ENCODE measurements at regions of chr14 and their contacts with region 1.

Region 1: GRCh38 chr14:21917699-21918436 is 244.2 kb upstream of the OR4E1 start:
- DNase-seq: peak in 7 of 9 donors; percentile 60 to 73 (median 64)
- ATAC-seq: peak; percentile 78
- H3K4me3 ChIP-seq: peak overlapping the region; percentile 49
- H3K4me3 Mint-ChIP-seq: peak overlapping the region; percentile 64 to 93 (median 84)
- H3K27ac ChIP-seq: peak overlapping the region; percentile 44
- H3K27ac Mint-ChIP-seq: peak overlapping the region; percentile 76 to 94 (median 85)
- H3K4me1 ChIP-seq: peaks cover 10 to 49% of the 10 kb centered on the region in 2 donors
- H3K4me1 Mint-ChIP-seq: peaks cover 12 to 83% (median 68%) of the 10 kb centered on the region in 7 donors
- H3K27me3 ChIP-seq: no peaks in the 10 kb centered on the region
- H3K27me3 Mint-ChIP-seq: no peaks in the 10 kb centered on the region

Region 2: GRCh38 chr14:21894003-21894897 is 23.6 kb before region 1 on chr14:
- CTCF ChIA-PET with region 1: interaction called, 8 read pairs
- POLR2A ChIA-PET with region 1: interaction called, 3 read pairs
- intact Hi-C with region 1: loop called in 1 of 2 experiments (anchors 2 kb)
- DNase-seq: peak; percentile 11 to 63 (median 49)
- ATAC-seq: peak; percentile 89
- H3K4me3 ChIP-seq: peak overlapping the region; percentile 50
- H3K4me3 Mint-ChIP-seq: peak overlapping the region; percentile 74 to 87 (median 82)
- H3K27ac ChIP-seq: peak overlapping the region; percentile 64
- H3K27ac Mint-ChIP-seq: peak overlapping the region; percentile 66 to 92 (median 86)
- H3K4me1 ChIP-seq: no peaks in the 10 kb centered on the region
- H3K4me1 Mint-ChIP-seq: peaks cover 5 to 14% (median 12%) of the 10 kb centered on the region in 7 donors
- H3K27me3 ChIP-seq: no peaks in the 10 kb centered on the region
- H3K27me3 Mint-ChIP-seq: peaks cover 0 to 5% (median 0%) of the 10 kb centered on the region in 5 donors

Region 3: GRCh38 chr14:21940887-21941856 is 23.3 kb after region 1 on chr14:
- CTCF ChIA-PET with region 1: interaction called, 5 read pairs
- POLR2A ChIA-PET with region 1: interaction called, 5 read pairs
- intact Hi-C with region 1: loop called (anchors 1 to 2 kb)
- DNase-seq: peak in 7 of 9 donors; percentile 42 to 56 (median 51)
- ATAC-seq: peak; percentile 78
- H3K4me3 ChIP-seq: peak overlapping the region; percentile 30
- H3K4me3 Mint-ChIP-seq: peak overlapping the region; percentile 63 to 88 (median 78)
- H3K27ac ChIP-seq: peak overlapping the region; percentile 56
- H3K27ac Mint-ChIP-seq: peak overlapping the region; percentile 79 to 95 (median 90)
- H3K4me1 ChIP-seq: peaks cover 0 to 8% of the 10 kb centered on the region in 2 donors
- H3K4me1 Mint-ChIP-seq: peaks cover 5 to 48% (median 31%) of the 10 kb centered on the region in 7 donors
- H3K27me3 ChIP-seq: no peaks in the 10 kb centered on the region
- H3K27me3 Mint-ChIP-seq: peaks cover 0 to 33% (median 0%) of the 10 kb centered on the region in 5 donors

Region 4: GRCh38 chr14:22039938-22040775 is 122.3 kb after region 1 on chr14:
- CTCF ChIA-PET with region 1: interaction called, 4 read pairs
- POLR2A ChIA-PET with region 1: no interaction called
- intact Hi-C with region 1: loop called in 1 of 2 experiments (anchors 2 kb)
- DNase-seq: peak in 7 of 9 donors; percentile 46 to 70 (median 59)
- ATAC-seq: peak; percentile 93
- H3K4me3 ChIP-seq: peak overlapping the region; percentile 40
- H3K4me3 Mint-ChIP-seq: peak overlapping the region; percentile 79 to 91 (median 83)
- H3K27ac ChIP-seq: peak overlapping the region; percentile 64
- H3K27ac Mint-ChIP-seq: peak overlapping the region; percentile 80 to 92 (median 88)
- H3K4me1 ChIP-seq: no peaks in the 10 kb centered on the region
- H3K4me1 Mint-ChIP-seq: peaks cover 2 to 34% (median 12%) of the 10 kb centered on the region in 7 donors
- H3K27me3 ChIP-seq: no peaks in the 10 kb centered on the region
- H3K27me3 Mint-ChIP-seq: peaks cover 0 to 8% (median 0%) of the 10 kb centered on the region in 5 donors

Region 5: GRCh38 chr14:22497144-22497423 is 579.2 kb after region 1 on chr14:
- CTCF ChIA-PET with region 1: no interaction called
- POLR2A ChIA-PET with region 1: interaction called, 3 read pairs
- intact Hi-C with region 1: loop called in 1 of 2 experiments (anchors 5 kb)
- DNase-seq: no peak
- ATAC-seq: no peak
- H3K4me3 ChIP-seq: peak overlapping the region; percentile 67
- H3K4me3 Mint-ChIP-seq: peak overlapping the region; percentile 79 to 96 (median 89)
- H3K27ac ChIP-seq: peak overlapping the region; percentile 90
- H3K27ac Mint-ChIP-seq: peak overlapping the region; percentile 90 to 97 (median 95)
- H3K4me1 ChIP-seq: peaks cover 3 to 9% of the 10 kb centered on the region in 2 donors
- H3K4me1 Mint-ChIP-seq: peaks cover 4 to 49% (median 21%) of the 10 kb centered on the region in 7 donors
- H3K27me3 ChIP-seq: no peaks in the 10 kb centered on the region
- H3K27me3 Mint-ChIP-seq: no peaks in the 10 kb centered on the region

Region 6: GRCh38 chr14:22986508-22987054 is 1068.7 kb after region 1 on chr14:
- CTCF ChIA-PET with region 1: interaction called, 3 read pairs
- POLR2A ChIA-PET with region 1: no interaction called
- intact Hi-C with region 1: loop called in 1 of 2 experiments (anchors 5 kb)
- DNase-seq: peak; percentile 65 to 87 (median 82)
- ATAC-seq: peak; percentile 79
- H3K4me3 ChIP-seq: no peak overlapping the region
- H3K4me3 Mint-ChIP-seq: no peak overlapping the region
- H3K27ac ChIP-seq: no peak overlapping the region
- H3K27ac Mint-ChIP-seq: peak overlapping the region in 4 of 9 donors; percentile 2 to 39 (median 24)
- H3K4me1 ChIP-seq: peaks cover 0 to 8% of the 10 kb centered on the region in 2 donors
- H3K4me1 Mint-ChIP-seq: peaks cover 0 to 5% (median 0%) of the 10 kb centered on the region in 7 donors
- H3K27me3 ChIP-seq: no peaks in the 10 kb centered on the region
- H3K27me3 Mint-ChIP-seq: no peaks in the 10 kb centered on the region